ENCODE measurements at regions of chr22 and their contacts with region 1.

Region 1: GRCh38 chr22:38051900-38052862 is 5.0 kb upstream of the PICK1 start:
- DNase-seq: peak; percentile 90
- ATAC-seq: peak; percentile 83
- H3K4me3 Mint-ChIP-seq: no peak overlapping the region
- H3K27ac Mint-ChIP-seq: no peak overlapping the region
- H3K4me1 Mint-ChIP-seq: peaks cover 6% of the 10 kb centered on the region
- H3K27me3 Mint-ChIP-seq: peaks cover 3% of the 10 kb centered on the region
- CTCF ChIP-seq: peak; percentile 88

Region 2: DNA sequence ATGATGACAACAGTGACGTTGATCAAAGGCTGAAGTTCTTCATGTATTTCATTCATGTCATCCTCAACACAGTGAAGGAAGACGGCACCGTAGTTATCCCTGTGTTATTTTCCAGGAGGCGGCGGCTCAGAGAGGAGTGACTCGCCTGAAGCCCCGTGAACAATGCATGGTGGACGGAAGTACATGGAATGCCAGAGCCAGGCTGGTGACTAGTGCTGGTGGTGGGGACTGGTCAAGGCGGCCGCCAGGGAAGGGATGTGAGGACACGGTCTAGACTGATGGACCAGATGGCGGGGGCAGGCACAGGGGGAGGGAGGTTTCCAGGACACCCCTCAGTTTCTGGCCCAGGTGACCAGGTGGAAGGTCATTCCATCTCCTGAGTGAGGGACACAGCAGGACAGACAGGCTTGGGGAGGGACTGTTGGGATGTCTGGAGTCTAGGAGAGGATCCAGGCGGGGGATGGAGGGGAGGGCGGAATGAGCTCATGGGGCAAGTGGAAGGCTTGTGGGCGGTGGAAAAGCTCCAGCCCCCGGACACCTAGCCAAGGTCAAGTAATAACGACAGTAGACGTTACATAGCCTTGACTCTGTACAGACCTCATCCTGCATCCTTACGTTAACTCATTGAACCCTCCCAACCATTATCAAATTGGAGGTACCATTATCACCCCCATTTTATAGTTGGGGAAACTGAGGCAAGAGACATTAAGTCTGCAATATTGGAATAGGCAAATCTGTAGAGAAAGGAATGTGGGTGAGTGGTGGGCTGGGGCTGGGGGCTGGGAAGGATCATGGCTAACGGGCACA is 11.0 kb before region 1 on chr22:
- CTCF ChIA-PET with region 1: interaction called, 10 read pairs
- POLR2A ChIA-PET with region 1: no interaction called
- intact Hi-C with region 1: no loop called
- DNase-seq: no peak
- ATAC-seq: no peak
- H3K4me3 Mint-ChIP-seq: no peak overlapping the region
- H3K27ac Mint-ChIP-seq: no peak overlapping the region
- H3K4me1 Mint-ChIP-seq: no peaks in the 10 kb centered on the region
- H3K27me3 Mint-ChIP-seq: no peaks in the 10 kb centered on the region
- CTCF ChIP-seq: no peak

Region 3: DNA sequence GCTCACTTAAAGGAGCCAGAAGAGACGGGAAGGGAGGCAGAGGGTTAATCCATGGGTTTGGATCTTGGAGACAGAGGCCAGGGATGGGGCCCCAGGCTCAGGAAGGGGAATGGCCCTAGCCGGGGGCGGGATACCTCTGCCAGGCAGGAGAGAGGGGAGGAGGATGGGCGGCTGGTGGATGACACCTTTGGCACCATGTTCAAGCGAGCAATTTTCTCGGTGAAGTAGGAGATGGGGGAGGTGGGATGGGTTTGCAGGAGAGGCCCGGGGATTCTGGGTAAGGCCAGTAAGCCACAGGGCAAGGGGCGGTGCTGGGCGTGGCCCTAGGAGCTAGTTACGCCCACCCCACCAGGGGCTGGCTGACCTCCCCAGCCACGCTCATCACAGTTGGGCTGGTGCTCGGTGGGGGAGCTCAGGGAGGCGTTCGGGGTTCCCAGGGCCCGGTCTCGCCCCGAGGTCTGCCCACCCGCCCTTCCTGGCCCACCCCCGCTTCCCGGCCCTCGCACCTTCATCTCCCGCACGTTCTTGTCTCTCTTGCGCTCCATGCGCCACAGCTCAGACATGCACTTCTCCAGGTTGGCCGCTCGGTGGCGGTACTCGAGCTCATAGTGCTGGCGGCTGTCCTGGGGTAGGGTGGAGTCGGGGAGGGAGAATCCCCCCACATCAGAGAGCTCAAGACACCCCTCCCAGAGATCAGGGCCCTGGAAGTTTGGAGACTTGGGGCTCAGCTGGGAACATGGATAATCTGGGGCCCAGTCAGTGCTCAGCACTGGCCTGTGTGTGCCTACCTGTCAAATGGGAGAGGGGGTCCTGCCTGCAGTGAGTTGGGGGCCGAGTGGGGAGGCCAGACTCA is 45.6 kb after region 1 on chr22:
- CTCF ChIA-PET with region 1: interaction called, 11 read pairs
- POLR2A ChIA-PET with region 1: interaction called, 3 read pairs
- intact Hi-C with region 1: no loop called
- DNase-seq: no peak
- ATAC-seq: no peak
- H3K4me3 Mint-ChIP-seq: no peak overlapping the region
- H3K27ac Mint-ChIP-seq: no peak overlapping the region
- H3K4me1 Mint-ChIP-seq: no peaks in the 10 kb centered on the region
- H3K27me3 Mint-ChIP-seq: no peaks in the 10 kb centered on the region
- CTCF ChIP-seq: no peak

Region 4: DNA sequence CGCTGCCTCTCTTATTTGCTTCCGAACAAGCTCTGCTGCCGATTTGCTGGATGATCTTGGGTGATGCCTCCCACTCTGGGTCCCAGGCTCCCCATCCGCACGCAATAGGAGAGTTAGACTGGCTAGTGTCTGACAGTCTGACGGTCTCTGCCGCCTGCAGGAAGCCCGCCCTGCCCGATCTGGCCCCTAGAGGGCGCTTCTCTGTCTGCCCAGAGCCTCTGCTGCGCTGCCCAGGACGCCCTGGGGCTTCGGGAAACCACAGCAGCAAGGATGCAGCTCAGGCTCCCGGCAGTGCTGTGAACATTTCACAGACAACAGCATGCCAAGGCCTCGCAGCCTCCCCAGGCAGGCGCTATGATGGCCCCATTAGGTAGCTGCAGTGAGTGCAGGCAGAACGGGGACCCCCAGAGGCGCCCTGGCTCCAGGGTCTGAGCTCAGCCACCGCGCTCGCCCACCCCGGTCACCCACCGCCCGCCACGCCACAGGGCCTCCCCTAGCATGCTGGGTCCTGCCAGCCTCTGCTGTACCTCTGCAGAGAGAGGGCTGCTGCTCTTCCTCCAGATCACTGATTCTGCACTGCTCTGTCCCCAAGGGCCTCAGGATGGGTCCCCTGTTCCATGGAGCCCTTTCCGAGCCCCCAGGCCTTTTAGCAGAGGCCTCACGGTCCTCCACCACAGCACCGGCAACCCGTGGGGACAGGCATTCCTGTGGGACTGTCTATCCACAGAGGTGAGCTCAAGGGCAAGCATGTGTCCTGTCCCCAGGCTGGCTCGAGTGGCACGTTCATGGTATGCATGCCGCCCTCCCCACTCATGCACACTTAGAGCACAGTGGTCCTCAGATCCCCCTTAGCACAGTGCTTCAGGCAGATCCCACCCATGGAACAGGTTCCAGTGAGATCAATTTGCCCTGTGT is 62.6 kb after region 1 on chr22:
- CTCF ChIA-PET with region 1: interaction called, 10 read pairs
- POLR2A ChIA-PET with region 1: no interaction called
- intact Hi-C with region 1: no loop called
- DNase-seq: peak; percentile 87
- ATAC-seq: peak; percentile 93
- H3K4me3 Mint-ChIP-seq: no peak overlapping the region
- H3K27ac Mint-ChIP-seq: no peak overlapping the region
- H3K4me1 Mint-ChIP-seq: peaks cover 1% of the 10 kb centered on the region
- H3K27me3 Mint-ChIP-seq: no peaks in the 10 kb centered on the region
- CTCF ChIP-seq: peak; percentile 95

Region 5: GRCh38 chr22:38132794-38133193 is 80.6 kb after region 1 on chr22:
- CTCF ChIA-PET with region 1: no interaction called
- POLR2A ChIA-PET with region 1: no interaction called
- intact Hi-C with region 1: no loop called
- DNase-seq: no peak
- ATAC-seq: no peak
- H3K4me3 Mint-ChIP-seq: no peak overlapping the region
- H3K27ac Mint-ChIP-seq: no peak overlapping the region
- H3K4me1 Mint-ChIP-seq: no peaks in the 10 kb centered on the region
- H3K27me3 Mint-ChIP-seq: no peaks in the 10 kb centered on the region
- CTCF ChIP-seq: no peak

Region 6: GRCh38 chr22:38176170-38176741 is 124.1 kb after region 1 on chr22:
- CTCF ChIA-PET with region 1: interaction called, 13 read pairs
- POLR2A ChIA-PET with region 1: no interaction called
- intact Hi-C with region 1: no loop called
- DNase-seq: peak; percentile 65
- ATAC-seq: peak; percentile 38
- H3K4me3 Mint-ChIP-seq: peak overlapping the region; percentile 42
- H3K27ac Mint-ChIP-seq: peak overlapping the region; percentile 82
- H3K4me1 Mint-ChIP-seq: peaks cover 68% of the 10 kb centered on the region
- H3K27me3 Mint-ChIP-seq: no peaks in the 10 kb centered on the region
- CTCF ChIP-seq: no peak

Region 7: DNA sequence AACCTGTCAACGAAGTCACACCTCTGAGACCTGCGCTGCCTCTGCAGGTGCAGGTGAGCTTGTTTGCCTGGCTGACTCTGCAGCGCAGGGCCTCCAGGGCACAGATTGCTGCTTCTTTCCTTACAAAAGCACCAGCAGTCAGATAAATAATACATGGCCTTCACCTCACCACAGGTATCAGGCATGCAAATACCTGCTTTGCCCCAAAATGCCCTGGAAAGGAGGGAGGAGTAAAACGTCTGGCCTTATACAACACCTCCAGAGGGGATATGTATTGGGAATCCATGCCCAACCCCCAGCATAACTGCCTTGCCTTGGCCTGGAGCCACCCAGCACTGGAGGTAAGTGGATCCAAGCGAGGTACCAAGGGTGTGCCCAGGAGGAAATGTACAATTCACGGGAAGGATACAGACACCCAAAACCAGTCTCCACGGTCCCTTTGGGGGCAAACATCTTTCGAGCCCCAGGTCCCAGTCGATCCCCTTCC is 219.7 kb after region 1 on chr22:
- CTCF ChIA-PET with region 1: interaction called, 11 read pairs
- POLR2A ChIA-PET with region 1: interaction called, 3 read pairs
- intact Hi-C with region 1: no loop called
- DNase-seq: no peak
- ATAC-seq: peak; percentile 4
- H3K4me3 Mint-ChIP-seq: peak overlapping the region; percentile 80
- H3K27ac Mint-ChIP-seq: peak overlapping the region; percentile 60
- H3K4me1 Mint-ChIP-seq: peaks cover 42% of the 10 kb centered on the region
- H3K27me3 Mint-ChIP-seq: no peaks in the 10 kb centered on the region
- CTCF ChIP-seq: no peak

Region 8: DNA sequence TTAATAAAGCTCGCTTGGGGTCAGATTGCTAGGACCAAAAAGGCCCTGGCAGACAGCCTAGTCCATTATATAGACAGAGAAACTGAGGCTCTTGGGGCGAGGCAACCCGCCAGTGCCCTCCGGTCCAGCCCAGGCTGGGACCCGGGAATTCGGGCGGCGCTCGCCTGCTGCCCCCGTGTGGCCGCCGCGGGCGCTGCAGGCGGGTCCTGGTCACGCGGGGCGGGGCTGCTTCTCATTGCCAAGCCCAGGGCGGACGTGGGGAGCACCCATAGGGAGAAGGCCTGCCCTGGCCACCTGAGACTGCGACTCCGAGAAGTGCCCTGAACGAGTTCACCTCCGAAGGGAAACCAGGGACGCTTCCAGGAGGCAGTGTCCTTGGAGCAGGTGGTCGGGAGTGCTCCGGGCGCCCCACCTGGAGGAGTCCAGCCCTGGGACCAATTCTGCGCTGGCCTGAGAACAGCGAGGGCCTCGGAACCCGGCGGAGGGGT is 301.0 kb after region 1 on chr22:
- CTCF ChIA-PET with region 1: interaction called, 9 read pairs
- POLR2A ChIA-PET with region 1: no interaction called
- intact Hi-C with region 1: loop called (anchors 10 kb)
- DNase-seq: peak; percentile 67
- ATAC-seq: peak; percentile 96
- H3K4me3 Mint-ChIP-seq: no peak overlapping the region
- H3K27ac Mint-ChIP-seq: no peak overlapping the region
- H3K4me1 Mint-ChIP-seq: no peaks in the 10 kb centered on the region
- H3K27me3 Mint-ChIP-seq: no peaks in the 10 kb centered on the region
- CTCF ChIP-seq: peak; percentile 98